ENCODE measurements at regions of chrX and their contacts with region 1.

Region 1: DNA sequence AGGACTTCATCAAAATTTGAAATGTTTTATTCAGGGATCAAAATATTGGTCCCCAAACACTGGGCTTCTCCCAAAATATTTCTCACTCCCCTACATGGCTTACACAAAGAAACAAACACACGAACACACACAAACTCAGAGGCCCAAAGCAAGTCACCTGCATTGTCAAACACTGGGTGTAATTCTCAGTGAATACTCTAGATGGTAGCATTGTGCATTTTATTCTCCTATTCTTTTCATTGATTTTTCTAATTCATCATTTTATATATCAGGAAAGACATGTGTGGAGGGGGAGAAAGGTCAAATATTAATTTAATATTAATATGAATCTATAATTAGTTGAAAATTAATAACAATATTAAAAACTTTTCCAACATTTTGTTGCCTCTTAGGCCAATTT is 72.3 kb upstream of the TNMD start:
- H3K4me3 Mint-ChIP-seq: no peak overlapping the region
- H3K27ac Mint-ChIP-seq: no peak overlapping the region
- H3K4me1 Mint-ChIP-seq: no peaks in the 10 kb centered on the region
- H3K27me3 Mint-ChIP-seq: peaks cover 2% of the 10 kb centered on the region

Region 2: GRCh38 chrX:100636321-100636991 is 124.0 kb after region 1 on chrX and contains the start of gene TSPAN6:
- intact Hi-C with region 1: loop called (anchors 2 kb)
- H3K4me3 Mint-ChIP-seq: peak within 1 kb of the TSS; percentile 68
- H3K27ac Mint-ChIP-seq: no peak within 1 kb of the TSS
- H3K4me1 Mint-ChIP-seq: peaks cover 5% of the 10 kb centered on the region
- H3K27me3 Mint-ChIP-seq: peaks cover 59% of the 10 kb centered on the region

Region 3: DNA sequence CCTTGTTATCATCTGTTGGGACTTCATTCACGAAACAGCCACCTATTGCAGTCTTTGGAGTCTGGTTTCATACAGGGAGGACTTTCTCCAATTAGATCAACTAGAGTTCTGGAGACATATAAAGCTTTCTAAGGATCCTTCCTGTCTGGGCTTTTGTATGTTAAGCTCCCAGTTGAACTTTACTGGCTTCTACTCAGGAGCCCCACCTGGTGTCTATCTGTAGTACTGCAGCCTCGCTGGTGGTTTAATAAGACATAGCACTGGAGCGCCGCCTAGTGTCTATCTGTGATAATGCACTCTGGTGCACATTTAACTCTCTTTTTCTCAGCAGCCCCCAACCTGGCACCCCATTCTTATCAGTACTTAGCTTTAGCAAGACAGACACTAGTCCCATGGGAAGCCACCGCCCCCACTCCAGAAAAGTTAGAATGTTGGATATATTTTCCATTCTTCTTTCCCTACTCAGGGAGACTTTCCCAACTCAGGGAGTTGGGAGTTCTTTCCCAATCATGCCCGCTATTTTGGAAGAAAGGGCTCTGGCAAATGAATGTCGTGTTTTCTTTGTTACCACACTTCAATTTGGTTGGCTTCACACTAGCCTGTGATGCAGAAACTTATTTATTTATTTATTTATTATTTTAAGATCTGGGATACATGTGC is 256.3 kb after region 1 on chrX:
- intact Hi-C with region 1: loop called (anchors 2 kb)
- H3K4me3 Mint-ChIP-seq: no peak overlapping the region
- H3K27ac Mint-ChIP-seq: no peak overlapping the region
- H3K4me1 Mint-ChIP-seq: peaks cover 8% of the 10 kb centered on the region
- H3K27me3 Mint-ChIP-seq: peaks cover 6% of the 10 kb centered on the region

Measured in dendritic cell treated with granulocyte-macrophage colony-stimulating factor and Interleukin-4, amounts not matched to agents 40 ng/mL and 50 ng/mL, for 4 days (primary cell).